Activated B cell treated with CpG ODN at 0.5 μM for 24 hours (primary cell): ENCODE measurements at regions of chr2 and their contacts with region 1.

Region 1: GRCh38 chr2:232521959-232522622 is 1.9 kb downstream of the PRSS56 start:
- DNase-seq: peak; percentile 79
- ATAC-seq: peak; percentile 65
- H3K4me3 Mint-ChIP-seq: peak overlapping the region; percentile 7
- H3K27ac Mint-ChIP-seq: no peak overlapping the region
- H3K4me1 Mint-ChIP-seq: peaks cover 15% of the 10 kb centered on the region
- H3K27me3 Mint-ChIP-seq: peaks cover 36% of the 10 kb centered on the region
- CTCF ChIP-seq: peak; percentile 56

Region 2: GRCh38 chr2:231900972-231901371 is 621.1 kb before region 1 on chr2:
- CTCF ChIA-PET with region 1: no interaction called
- POLR2A ChIA-PET with region 1: no interaction called
- intact Hi-C with region 1: loop called (anchors 1 kb)
- DNase-seq: no peak
- ATAC-seq: no peak
- H3K4me3 Mint-ChIP-seq: no peak overlapping the region
- H3K27ac Mint-ChIP-seq: no peak overlapping the region
- H3K4me1 Mint-ChIP-seq: no peaks in the 10 kb centered on the region
- H3K27me3 Mint-ChIP-seq: no peaks in the 10 kb centered on the region
- CTCF ChIP-seq: no peak

Region 3: DNA sequence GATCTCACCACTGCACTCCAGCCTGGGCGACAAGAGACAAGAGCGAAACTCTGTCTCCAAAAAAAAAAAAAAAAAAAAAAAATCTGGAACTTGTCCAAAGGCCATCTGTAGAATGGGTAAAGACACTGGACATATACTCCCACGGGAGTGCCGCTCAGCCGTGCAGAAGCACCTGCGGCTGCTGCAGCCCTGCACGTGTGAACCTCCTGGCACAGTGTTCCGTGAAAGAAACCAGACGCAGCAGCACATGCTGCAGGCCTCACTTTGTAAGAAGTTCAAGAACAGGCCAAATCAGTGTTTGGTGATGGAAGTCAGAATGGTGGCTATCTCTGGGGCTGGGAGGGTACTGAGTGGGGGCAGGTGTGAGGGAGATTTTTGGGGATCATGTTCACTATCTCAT is 10.3 kb after region 1 on chr2:
- CTCF ChIA-PET with region 1: interaction called, 3 read pairs
- POLR2A ChIA-PET with region 1: interaction called, 10 read pairs
- intact Hi-C with region 1: no loop called
- DNase-seq: no peak
- ATAC-seq: no peak
- H3K4me3 Mint-ChIP-seq: no peak overlapping the region
- H3K27ac Mint-ChIP-seq: no peak overlapping the region
- H3K4me1 Mint-ChIP-seq: no peaks in the 10 kb centered on the region
- H3K27me3 Mint-ChIP-seq: peaks cover 12% of the 10 kb centered on the region
- CTCF ChIP-seq: no peak

Region 4: DNA sequence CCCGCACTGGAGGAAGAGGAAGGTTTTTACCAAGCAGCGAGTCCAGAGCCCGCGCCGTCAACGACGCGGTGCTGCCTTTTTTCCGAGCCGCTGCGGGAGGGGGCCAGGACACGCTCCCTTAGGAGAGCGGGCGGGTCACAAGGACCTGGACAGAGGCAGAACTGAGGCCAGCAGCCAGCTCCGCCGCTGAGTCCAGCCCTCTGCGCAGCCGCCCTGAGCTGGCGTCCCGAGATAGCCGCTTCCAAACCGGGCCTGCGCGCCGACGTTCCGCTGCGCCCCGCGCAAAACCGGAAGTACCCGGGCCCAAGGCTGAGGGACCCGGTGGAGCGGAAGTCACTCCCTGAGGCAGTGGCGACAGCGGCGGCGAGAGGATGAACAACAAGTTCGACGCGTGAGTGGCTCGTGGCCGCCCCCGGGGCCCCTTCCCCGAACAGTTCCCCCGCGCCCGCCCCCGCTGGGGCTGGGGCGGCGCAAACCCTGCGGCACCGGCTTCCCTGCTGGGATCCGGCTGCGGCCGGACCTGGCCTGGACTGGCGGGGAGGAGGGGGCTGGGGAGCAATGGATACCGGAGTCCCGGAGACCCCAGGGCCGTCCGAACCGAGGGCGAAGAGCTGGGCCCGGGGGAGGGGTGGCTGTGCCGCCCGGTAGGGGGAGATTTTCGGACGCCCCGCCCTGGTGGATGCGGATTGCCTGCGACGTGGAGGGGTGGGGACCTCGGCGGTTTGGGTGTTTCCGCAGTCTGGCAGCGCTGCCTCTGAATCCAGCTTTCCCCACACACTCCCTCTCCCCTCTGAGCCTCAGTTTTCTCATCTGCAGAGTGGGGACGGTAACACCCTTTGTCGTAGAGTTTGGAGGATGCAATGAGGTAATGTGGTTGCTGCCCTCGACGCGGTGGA is 28.5 kb after region 1 on chr2 and contains the starts of genes EIF4E2 and TIGD1:
- CTCF ChIA-PET with region 1: interaction called, 4 read pairs
- POLR2A ChIA-PET with region 1: no interaction called
- intact Hi-C with region 1: loop called (anchors 1 kb)
- DNase-seq: peak; percentile 86
- ATAC-seq: peak; percentile 85
- H3K4me3 Mint-ChIP-seq: peak within 1 kb of the TSS; percentile 98
- H3K27ac Mint-ChIP-seq: peak within 1 kb of the TSS; percentile 99
- H3K4me1 Mint-ChIP-seq: peaks cover 63% of the 10 kb centered on the region
- H3K27me3 Mint-ChIP-seq: no peaks in the 10 kb centered on the region
- CTCF ChIP-seq: no peak
- total RNA-seq, gene EIF4E2: 63.2 and 67.2 TPM in 2 replicates
- total RNA-seq, gene TIGD1: 8.1 and 8.8 TPM in 2 replicates